ENCODE measurements at regions of chr1 and their contacts with region 1.

Region 1: DNA sequence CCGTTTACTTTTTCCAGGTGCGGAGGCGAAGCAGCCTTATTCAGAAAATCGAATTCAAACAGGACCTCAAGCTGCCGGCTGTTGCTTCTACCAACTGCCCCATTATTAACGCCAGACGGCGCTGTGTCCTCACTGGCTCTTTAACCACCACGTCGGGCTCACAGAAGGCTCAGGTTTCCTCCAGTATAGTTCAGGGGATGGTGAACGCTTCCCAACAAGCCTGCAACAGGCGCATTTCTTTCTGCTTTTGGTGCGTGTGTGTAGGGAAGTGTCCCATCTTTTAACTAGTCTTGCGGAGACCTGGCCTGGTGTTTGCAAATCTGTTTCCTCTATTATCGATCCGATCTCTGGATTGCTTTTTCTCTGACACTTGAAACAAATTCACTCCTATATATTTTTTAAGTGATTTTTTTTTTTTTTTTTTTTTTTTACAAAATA is 791 bp upstream of the STUM start:
- DNase-seq: peak; percentile 80 to 83
- H3K4me3 ChIP-seq: peak overlapping the region in 1 of 3 donors; percentile 29
- H3K27ac ChIP-seq: no peak overlapping the region
- H3K4me1 ChIP-seq: peaks cover 13 to 28% of the 10 kb centered on the region in 2 donors
- H3K27me3 ChIP-seq: no peaks in the 10 kb centered on the region
- CTCF ChIP-seq: peak; percentile 67 to 88 (median 75)
- POLR2A ChIP-seq: no peak

Region 2: DNA sequence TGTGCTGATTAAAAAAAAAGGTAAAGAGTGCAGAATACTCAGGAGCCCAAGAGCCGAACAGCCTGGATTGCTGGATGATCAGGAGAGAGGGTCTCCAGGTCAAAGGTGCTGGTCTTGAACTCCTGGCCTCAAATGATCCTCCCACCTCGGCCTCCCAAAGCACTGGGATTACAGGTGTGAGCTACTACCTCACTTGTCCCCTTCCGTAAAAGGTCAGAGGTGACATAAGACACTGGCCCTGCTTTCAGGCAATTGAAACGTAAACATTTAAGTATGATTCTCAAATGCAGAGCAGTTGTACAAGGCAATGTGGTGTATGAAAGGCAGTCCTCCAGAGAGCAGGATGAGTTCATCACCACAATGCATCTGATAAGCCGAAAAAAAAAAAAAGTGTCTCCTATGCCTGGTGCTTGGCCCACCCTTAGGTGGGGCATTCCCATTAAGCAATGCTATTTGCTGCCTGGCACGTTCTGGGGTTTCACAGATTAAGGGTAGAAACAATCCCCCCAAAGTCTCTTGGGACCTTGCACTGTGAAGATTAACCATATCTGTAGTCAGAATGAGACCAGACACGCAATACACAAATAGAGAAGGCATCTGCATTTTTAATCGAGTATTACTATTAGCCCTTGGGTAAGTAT is 187.5 kb before region 1 on chr1:
- intact Hi-C with region 1: no loop called
- DNase-seq: no peak
- H3K4me3 ChIP-seq: no peak overlapping the region
- H3K27ac ChIP-seq: no peak overlapping the region
- H3K4me1 ChIP-seq: no peaks in the 10 kb centered on the region
- H3K27me3 ChIP-seq: no peaks in the 10 kb centered on the region
- CTCF ChIP-seq: no peak
- POLR2A ChIP-seq: no peak

Region 3: DNA sequence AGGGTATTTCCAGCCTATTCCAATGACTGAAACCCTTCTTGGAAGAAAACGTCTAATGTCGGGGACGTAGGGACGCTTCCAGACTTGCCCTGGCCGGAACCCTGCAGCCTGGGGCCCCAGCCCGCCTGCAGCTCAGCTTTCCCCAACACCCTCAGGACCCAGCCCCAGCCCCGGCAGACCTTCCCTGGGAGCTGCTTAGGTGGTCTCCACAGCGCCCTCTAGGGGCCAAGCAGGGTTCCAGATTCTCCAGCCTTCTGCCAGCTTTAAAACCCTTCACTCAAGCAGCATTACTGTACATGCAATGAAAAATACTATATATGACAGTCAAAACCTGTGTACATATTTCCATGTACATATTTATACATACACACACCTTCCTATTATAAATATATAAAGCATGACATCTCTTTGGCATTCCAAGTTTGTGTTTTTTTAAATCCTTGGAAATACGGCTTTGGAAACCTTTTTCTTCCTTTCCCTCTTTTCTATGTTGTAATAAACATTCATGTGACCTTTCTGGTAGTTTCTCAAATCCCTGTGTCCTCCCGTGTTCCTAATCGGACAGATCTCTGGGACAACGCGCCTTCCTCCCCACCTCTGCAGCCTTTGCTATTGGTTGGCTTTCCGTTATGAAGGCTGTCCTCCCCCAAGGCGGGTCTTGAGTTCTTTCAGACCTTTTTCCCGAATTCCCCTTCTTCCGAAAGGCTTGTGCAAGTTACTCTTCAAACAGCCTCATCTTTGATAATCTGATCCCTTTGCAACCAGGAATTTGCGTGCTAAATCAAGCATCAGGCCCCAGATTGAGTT is 61.1 kb after region 1 on chr1:
- intact Hi-C with region 1: loop called (anchors 5 kb)
- DNase-seq: peak; percentile 58 to 66
- H3K4me3 ChIP-seq: no peak overlapping the region
- H3K27ac ChIP-seq: no peak overlapping the region
- H3K4me1 ChIP-seq: peaks cover 0 to 8% of the 10 kb centered on the region in 2 donors
- H3K27me3 ChIP-seq: no peaks in the 10 kb centered on the region
- CTCF ChIP-seq: peak; percentile 39 to 83 (median 60)
- POLR2A ChIP-seq: no peak

Measured in thyroid gland (tissue), 4 donors.